ENCODE measurements at regions of chr6 and their contacts with region 1.

Region 1: GRCh38 chr6:20092071-20092566 is 120.2 kb downstream of the MBOAT1 start:
- DNase-seq: peak; percentile 87

Region 2: DNA sequence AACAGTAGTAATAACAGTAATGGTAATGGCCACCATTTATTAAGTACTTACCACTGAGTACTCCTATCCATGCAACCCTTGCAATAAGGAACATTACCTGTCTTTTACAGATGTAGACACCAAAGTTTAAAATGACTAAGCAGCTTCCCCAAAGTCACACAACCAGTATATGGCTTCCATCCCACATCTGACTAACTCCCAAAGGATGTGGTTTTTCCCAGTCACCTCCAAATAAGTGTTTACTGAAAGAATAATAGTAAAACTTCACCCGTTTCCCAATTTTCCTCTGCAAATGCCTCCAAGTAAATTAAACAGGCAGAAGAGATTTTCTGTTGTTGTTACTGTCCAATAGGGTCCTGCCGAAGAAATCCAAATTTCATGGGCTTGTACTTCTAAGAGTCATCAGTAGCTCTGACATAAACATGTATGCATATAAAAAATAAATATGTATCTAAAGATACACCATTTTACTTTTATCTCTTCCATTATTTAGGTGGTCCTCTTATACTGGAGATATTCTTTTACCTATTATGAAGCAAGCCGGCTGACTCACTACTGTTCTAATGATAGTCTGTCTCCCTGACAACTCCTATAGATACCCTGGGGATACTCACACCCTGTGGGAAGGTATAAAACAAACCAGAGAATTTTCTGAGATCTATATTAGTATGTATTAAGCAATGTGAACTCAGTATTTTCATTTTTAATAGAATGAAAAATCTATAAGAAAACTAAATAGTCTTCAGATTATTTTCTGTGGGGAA is 332.8 kb before region 1 on chr6:
- in situ Hi-C with region 1: no loop called
- DNase-seq: no peak

Region 3: GRCh38 chr6:19964115-19964514 is 128.0 kb before region 1 on chr6:
- in situ Hi-C with region 1: no loop called
- DNase-seq: no peak

Region 4: GRCh38 chr6:20266851-20267608 is 174.9 kb after region 1 on chr6:
- in situ Hi-C with region 1: no loop called
- DNase-seq: peak; percentile 69

Region 5: DNA sequence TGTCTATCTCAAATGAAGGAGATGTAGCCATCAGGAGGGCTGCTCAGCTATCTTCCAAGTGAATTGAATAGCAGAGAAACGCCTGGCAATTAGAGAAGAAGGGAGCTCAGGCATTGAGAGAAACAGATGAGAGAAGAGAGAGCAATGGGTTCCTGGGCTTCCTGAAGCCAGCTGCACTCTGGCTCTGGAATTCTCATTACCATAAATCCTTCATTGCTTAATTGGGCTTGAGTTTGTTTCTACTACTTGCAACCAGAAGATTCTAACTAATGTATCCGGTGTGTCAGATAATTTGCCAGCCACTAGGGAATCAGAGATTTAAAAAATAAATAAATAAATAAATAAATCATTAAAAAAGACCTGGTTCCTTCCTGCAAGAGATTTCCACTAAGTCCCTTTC is 417.1 kb after region 1 on chr6:
- in situ Hi-C with region 1: loop called (anchors 25 kb)
- DNase-seq: no peak